ENCODE measurements at regions of chr7 and their contacts with region 1.

Region 1: GRCh38 chr7:43071604-43072003 is 40.8 kb upstream of the HECW1 start:
- DNase-seq: peak; percentile 20 to 78 (median 28)
- ATAC-seq: peak; percentile 89
- H3K4me3 ChIP-seq: no peak overlapping the region
- H3K27ac ChIP-seq: peak overlapping the region; percentile 65; the same call in 1 of the 3 replicates
- H3K4me1 ChIP-seq: peaks cover 0 to 11% of the 10 kb centered on the region in 2 experiments; a peak in 3 of 5 replicates
- H3K27me3 ChIP-seq: no peaks in the 10 kb centered on the region
- CTCF ChIP-seq: peak; percentile 63 to 84 (median 69)
- EP300 ChIP-seq: no peak
- POLR2A ChIP-seq: no peak
- RAD21 ChIP-seq: peak in 1 of 2 experiments; percentile 61; a peak in 3 of 4 replicates

Region 2: GRCh38 chr7:43108255-43109011 is 36.8 kb after region 1 on chr7:
- CTCF ChIA-PET with region 1: no interaction called
- POLR2A ChIA-PET with region 1: no interaction called
- in situ Hi-C with region 1: no loop called
- intact Hi-C with region 1: loop called (anchors 2 kb)
- DNase-seq: peak; percentile 65 to 81 (median 72)
- ATAC-seq: peak; percentile 94
- H3K4me3 ChIP-seq: no peak overlapping the region
- H3K27ac ChIP-seq: no peak overlapping the region
- H3K4me1 ChIP-seq: peaks cover 11 to 17% of the 10 kb centered on the region in 2 experiments; a peak in 4 of 5 replicates
- H3K27me3 ChIP-seq: peaks cover 0 to 4% of the 10 kb centered on the region in 2 experiments; a peak in 2 of 5 replicates
- CTCF ChIP-seq: peak; percentile 88 to 93 (median 88)
- EP300 ChIP-seq: no peak
- POLR2A ChIP-seq: no peak
- RAD21 ChIP-seq: peak; percentile 37 to 75

Measured in K562 (cell line).